ENCODE measurements at regions of chr4 and their contacts with region 1.

Region 1: GRCh38 chr4:2008875-2009703 is at the start of gene NELFA:
- DNase-seq: peak; percentile 93
- ATAC-seq: peak; percentile 80
- H3K4me3 Mint-ChIP-seq: peak within 1 kb of the TSS; percentile 90
- H3K27ac Mint-ChIP-seq: peak within 1 kb of the TSS; percentile 91
- H3K4me1 Mint-ChIP-seq: peaks cover 32% of the 10 kb centered on the region
- H3K27me3 Mint-ChIP-seq: peaks cover 4% of the 10 kb centered on the region
- CTCF ChIP-seq: no peak
- total RNA-seq, gene NELFA: 44.7 and 49.9 TPM in 2 replicates

Region 2: GRCh38 chr4:1683736-1684505 is 325.2 kb before region 1 on chr4 and contains the start of gene FAM53A:
- CTCF ChIA-PET with region 1: no interaction called
- POLR2A ChIA-PET with region 1: no interaction called
- intact Hi-C with region 1: loop called (anchors 1 kb)
- DNase-seq: peak; percentile 99
- ATAC-seq: peak; percentile 95
- H3K4me3 Mint-ChIP-seq: peak within 1 kb of the TSS; percentile 86
- H3K27ac Mint-ChIP-seq: peak within 1 kb of the TSS; percentile 69
- H3K4me1 Mint-ChIP-seq: peaks cover 10% of the 10 kb centered on the region
- H3K27me3 Mint-ChIP-seq: no peaks in the 10 kb centered on the region
- CTCF ChIP-seq: no peak
- total RNA-seq, gene FAM53A: 0.81 and 1.2 TPM in 2 replicates

Region 3: DNA sequence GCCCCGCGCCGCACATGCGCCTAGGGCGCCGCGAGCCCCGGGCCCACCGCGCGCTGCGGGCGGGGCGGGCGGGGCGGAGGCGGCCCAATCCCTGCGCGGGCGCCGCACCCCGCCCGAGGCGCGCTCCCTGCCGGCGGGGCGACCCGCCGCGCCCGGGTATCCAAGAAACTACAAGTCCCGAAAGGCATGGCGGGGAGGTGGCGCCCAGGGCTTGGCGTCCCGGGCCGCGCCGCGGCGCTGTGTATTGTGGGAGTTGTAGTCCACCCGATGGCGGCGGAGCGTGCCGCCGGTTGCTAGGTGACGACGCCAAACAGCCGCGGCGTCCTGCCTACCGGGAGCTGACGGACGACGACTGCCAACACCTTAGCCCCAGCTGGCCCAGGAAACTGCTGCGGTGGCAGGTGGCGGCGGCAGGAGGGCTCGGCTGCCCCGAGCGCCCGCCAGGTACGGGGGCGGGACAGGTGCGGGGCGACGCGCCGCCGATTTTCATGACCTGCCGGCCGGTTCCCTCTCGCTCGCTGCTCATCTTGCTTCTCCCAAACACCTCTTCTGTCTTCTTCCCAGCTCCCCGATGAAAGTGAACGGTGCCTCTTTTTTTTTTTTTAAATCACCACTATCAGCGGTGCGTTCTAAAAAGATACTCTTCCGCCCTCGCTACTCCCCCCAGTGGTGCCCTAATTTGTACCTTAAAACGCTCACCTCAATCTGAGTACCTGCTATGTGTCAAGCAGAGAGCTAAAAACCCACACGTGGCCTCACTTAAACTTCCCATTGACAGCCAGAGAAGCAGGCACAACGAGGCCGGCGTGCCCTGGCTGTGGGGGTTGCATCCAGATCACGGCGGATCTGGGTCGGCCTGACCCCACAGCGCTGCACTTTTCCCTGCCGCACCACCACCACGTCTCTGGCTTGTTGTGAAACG is 409.8 kb after region 1 on chr4 and contains the start of gene CFAP99:
- CTCF ChIA-PET with region 1: no interaction called
- POLR2A ChIA-PET with region 1: no interaction called
- intact Hi-C with region 1: loop called (anchors 10 kb)
- DNase-seq: peak; percentile 93
- ATAC-seq: peak; percentile 91
- H3K4me3 Mint-ChIP-seq: peak within 1 kb of the TSS; percentile 91
- H3K27ac Mint-ChIP-seq: peak within 1 kb of the TSS; percentile 90
- H3K4me1 Mint-ChIP-seq: peaks cover 39% of the 10 kb centered on the region
- H3K27me3 Mint-ChIP-seq: peaks cover 28% of the 10 kb centered on the region
- CTCF ChIP-seq: no peak
- total RNA-seq, gene CFAP99: not detected in 2 replicates